ENCODE measurements at regions of chr14 and their contacts with region 1.

Region 1: GRCh38 chr14:67599698-67600561 is at the start of gene PIGH:
- DNase-seq: peak; percentile 92
- H3K4me3 Mint-ChIP-seq: peak within 1 kb of the TSS; percentile 92
- H3K27ac Mint-ChIP-seq: peak within 1 kb of the TSS; percentile 91
- H3K4me1 Mint-ChIP-seq: peaks cover 16% of the 10 kb centered on the region
- H3K27me3 Mint-ChIP-seq: peaks cover 9% of the 10 kb centered on the region
- total RNA-seq, gene PIGH: 14.5 and 21.8 TPM in 2 replicates

Region 2: GRCh38 chr14:67610491-67610890 is 10.6 kb after region 1 on chr14:
- intact Hi-C with region 1: no loop called
- DNase-seq: no peak
- H3K4me3 Mint-ChIP-seq: no peak overlapping the region
- H3K27ac Mint-ChIP-seq: no peak overlapping the region
- H3K4me1 Mint-ChIP-seq: peaks cover 8% of the 10 kb centered on the region
- H3K27me3 Mint-ChIP-seq: peaks cover 6% of the 10 kb centered on the region

Region 3: DNA sequence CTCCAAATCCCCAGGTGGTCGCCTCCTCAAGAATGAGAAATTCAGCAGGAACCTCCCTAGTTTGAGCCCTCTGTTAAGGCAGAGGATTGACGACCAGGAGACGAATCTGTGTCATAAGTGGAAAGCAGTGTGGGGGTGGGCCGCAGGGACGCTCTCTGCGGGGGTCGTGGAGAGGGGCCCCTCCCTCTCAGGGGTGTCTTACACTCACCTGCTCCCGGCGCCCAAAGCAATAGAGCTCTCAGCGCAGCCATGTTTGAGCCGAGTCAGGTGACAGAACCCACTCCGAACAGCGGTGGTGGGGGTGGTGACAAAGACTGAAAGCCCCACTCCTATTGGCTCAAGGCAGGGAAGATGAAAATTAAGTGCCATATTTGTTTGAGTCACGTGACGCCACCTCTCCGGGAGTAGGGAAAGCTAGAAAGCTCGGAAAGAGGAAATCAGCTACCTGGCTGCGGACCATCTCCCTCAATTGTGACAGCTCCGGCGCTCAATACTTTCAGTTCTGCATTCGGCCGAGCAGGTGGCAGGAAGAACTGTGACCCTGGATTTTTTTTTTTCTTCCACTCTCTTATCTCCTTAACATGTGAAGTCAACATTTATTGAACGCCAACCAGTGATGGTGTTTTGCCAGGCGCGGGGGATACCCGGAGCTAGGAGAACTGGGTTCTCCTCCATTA is 216.5 kb after region 1 on chr14 and contains the start of gene ZFYVE26:
- intact Hi-C with region 1: loop called (anchors 5 kb)
- DNase-seq: peak; percentile 89
- H3K4me3 Mint-ChIP-seq: peak within 1 kb of the TSS; percentile 87
- H3K27ac Mint-ChIP-seq: peak within 1 kb of the TSS; percentile 94
- H3K4me1 Mint-ChIP-seq: peaks cover 38% of the 10 kb centered on the region
- H3K27me3 Mint-ChIP-seq: no peaks in the 10 kb centered on the region
- total RNA-seq, gene ZFYVE26: 16.0 and 16.2 TPM in 2 replicates